HepG2 (cell line): ENCODE measurements at regions of chr10 and their contacts with region 1.

Region 1: DNA sequence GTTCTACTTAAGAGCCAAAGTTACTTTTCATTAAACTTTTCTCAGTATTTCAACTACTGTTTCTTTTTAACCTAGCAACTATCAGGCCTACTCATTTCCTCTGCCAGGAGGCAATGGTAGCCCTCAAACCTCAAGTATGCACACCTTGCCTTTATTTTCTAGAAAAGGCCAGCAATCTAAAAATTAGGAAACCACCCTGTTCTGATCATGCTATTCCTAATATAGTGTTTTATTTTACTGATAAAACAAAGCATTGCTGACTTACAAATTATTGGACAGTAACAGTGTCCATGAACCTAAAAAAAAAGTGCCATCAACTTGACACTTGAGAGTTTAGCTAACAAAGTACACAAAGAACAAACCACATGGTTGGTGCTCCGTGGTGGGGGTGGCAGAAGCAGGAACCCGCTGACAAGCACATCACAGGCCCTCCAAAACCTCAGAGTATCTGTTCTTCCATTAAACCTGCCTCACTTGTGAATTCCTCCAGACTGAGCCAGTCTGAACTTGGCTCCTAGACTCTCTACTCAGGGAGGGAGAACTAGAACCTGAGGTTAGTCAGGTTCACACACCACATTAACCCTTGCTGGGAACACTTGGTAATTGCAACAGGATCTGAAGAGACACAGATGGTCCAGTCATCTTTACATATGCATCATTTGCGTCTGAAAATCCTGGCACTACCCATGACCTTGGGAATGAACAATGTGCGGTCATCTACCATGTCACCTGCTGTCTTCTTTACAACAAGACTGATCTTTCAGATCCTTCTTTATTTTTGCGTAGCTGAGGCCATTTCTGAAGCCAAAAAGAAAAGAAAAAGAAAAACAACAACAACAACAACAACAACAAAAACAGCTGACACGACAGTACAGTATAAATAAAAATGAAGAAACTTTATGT is 31.9 kb downstream of the PIP4K2A start:
- DNase-seq: peak; percentile 69
- ATAC-seq: peak; percentile 61
- H3K4me3 ChIP-seq: peak overlapping the region; percentile 31 to 58 (median 43); a peak in 5 of 6 replicates
- H3K27ac ChIP-seq: peak overlapping the region; percentile 76
- H3K4me1 ChIP-seq: peaks cover 75% of the 10 kb centered on the region
- H3K27me3 ChIP-seq: no peaks in the 10 kb centered on the region
- CTCF ChIP-seq: no peak
- EP300 ChIP-seq: 0 out of 4 replicates have a peak, but pooled peaks of 1 of the 2 experiments have one; percentile 30
- POLR2A ChIP-seq: no peak
- RAD21 ChIP-seq: no peak

Region 2: GRCh38 chr10:22003079-22003913 is 679.2 kb before region 1 on chr10 and contains the start of gene DNAJC1:
- CTCF ChIA-PET with region 1: no interaction called
- POLR2A ChIA-PET with region 1: no interaction called
- in situ Hi-C with region 1: no loop called
- intact Hi-C with region 1: no loop called
- DNase-seq: peak; percentile 92
- ATAC-seq: peak; percentile 98
- H3K4me3 ChIP-seq: peak within 1 kb of the TSS; percentile 72 to 93 (median 83)
- H3K27ac ChIP-seq: peak within 1 kb of the TSS; percentile 84
- H3K4me1 ChIP-seq: peaks cover 20% of the 10 kb centered on the region
- H3K27me3 ChIP-seq: peaks cover 0 to 6% of the 10 kb centered on the region in 2 experiments; a peak in 1 of 5 replicates
- CTCF ChIP-seq: peak; percentile 8; the same call in 1 of the 2 replicates
- EP300 ChIP-seq: no peak
- POLR2A ChIP-seq: peak; percentile 66 to 77
- RAD21 ChIP-seq: peak; percentile 46; the same call in 1 of the 2 replicates
- total RNA-seq, gene DNAJC1: 8.8 and 16.6 TPM in 2 replicates

Region 3: GRCh38 chr10:22573820-22574569 is 108.5 kb before region 1 on chr10:
- CTCF ChIA-PET with region 1: no interaction called
- POLR2A ChIA-PET with region 1: no interaction called
- in situ Hi-C with region 1: no loop called
- intact Hi-C with region 1: no loop called
- DNase-seq: peak; percentile 28
- ATAC-seq: peak; percentile 47; the same call in 1 of the 3 replicates
- H3K4me3 ChIP-seq: no peak overlapping the region
- H3K27ac ChIP-seq: no peak overlapping the region
- H3K4me1 ChIP-seq: no peaks in the 10 kb centered on the region
- H3K27me3 ChIP-seq: no peaks in the 10 kb centered on the region
- CTCF ChIP-seq: peak; percentile 72
- EP300 ChIP-seq: no peak
- POLR2A ChIP-seq: no peak
- RAD21 ChIP-seq: peak; percentile 54

Region 4: GRCh38 chr10:22609728-22610465 is 72.6 kb before region 1 on chr10:
- CTCF ChIA-PET with region 1: no interaction called
- POLR2A ChIA-PET with region 1: no interaction called
- in situ Hi-C with region 1: no loop called
- intact Hi-C with region 1: no loop called
- DNase-seq: no peak
- ATAC-seq: no peak
- H3K4me3 ChIP-seq: no peak overlapping the region
- H3K27ac ChIP-seq: no peak overlapping the region
- H3K4me1 ChIP-seq: peaks cover 10% of the 10 kb centered on the region; the same call in 1 of the 2 replicates
- H3K27me3 ChIP-seq: no peaks in the 10 kb centered on the region
- CTCF ChIP-seq: 0 out of 2 replicates have a peak, but pooled peaks have one; percentile 8
- EP300 ChIP-seq: no peak
- POLR2A ChIP-seq: no peak
- RAD21 ChIP-seq: no peak

Region 5: DNA sequence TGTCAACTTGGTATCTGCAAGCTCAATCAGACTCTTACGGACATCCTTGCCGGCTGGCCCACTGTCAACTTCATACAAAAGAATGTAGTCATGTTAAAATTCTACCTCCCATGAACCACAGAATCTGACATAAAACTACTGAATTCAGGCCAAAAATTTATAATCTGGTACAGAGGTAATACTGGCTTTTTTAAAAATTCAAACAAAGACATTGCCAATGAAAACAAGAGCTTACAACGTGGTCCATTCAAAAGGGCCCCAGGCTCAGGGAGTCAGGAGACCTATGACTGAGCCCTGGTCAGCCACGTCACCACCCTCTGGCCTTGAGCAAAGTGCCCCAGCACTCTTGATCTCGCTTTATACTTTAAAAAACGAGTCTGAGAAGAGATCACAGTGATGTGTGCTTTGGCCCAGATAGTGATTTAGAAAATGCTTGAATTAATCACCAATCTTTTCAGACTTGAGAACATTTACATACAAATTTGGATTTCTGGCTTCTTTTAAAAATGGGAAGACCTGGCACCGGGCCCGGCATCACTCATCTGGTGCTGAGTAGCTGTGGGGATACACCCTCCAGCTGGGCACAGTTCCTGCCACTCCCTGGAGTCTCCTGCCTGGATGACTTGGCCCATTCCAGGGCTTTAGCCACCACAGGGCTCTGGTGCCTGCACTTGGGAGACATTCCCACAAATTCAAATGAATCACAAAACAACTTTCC is 62.2 kb before region 1 on chr10:
- CTCF ChIA-PET with region 1: no interaction called
- POLR2A ChIA-PET with region 1: interaction called, 5 read pairs
- in situ Hi-C with region 1: no loop called
- intact Hi-C with region 1: loop called (anchors 1 kb)
- DNase-seq: no peak
- ATAC-seq: no peak
- H3K4me3 ChIP-seq: no peak overlapping the region
- H3K27ac ChIP-seq: no peak overlapping the region
- H3K4me1 ChIP-seq: peaks cover 90% of the 10 kb centered on the region
- H3K27me3 ChIP-seq: no peaks in the 10 kb centered on the region
- CTCF ChIP-seq: no peak
- EP300 ChIP-seq: no peak
- POLR2A ChIP-seq: no peak
- RAD21 ChIP-seq: no peak

Region 6: DNA sequence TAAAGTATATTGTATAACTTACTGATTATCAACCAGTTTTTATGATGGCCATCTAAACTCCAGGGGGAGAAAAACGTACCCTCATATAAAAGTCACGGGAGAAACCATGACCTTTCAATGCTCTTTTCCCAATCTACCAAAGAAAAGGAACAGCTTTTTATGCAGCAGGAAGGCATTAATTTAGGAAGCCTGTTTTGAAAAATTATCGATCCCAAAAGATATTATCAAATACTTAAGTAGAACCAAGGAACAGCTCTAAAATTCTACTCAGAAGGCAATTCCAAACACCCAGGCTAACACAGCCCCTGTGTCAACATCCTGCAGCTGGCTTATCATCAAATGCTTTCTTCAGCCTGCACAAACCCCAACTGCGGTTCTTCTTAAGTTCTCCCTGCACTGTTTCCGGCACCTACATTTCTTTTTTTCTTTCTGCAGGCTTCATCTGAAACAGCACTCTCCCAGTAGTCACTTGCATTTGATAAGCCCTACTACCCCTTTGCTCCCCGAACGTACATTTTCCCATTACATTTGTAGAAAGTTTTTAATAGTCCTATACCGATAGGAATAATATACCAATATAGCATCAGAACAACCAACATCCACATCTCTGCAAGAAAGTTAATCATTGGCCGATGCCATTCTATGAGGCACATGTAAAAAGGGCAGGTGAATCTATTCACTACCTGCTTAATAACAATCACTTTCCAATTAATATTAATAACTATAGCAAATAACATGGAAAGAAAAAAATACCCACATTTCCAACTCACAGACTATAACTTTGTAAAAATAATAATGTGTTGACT is 16.0 kb before region 1 on chr10:
- CTCF ChIA-PET with region 1: no interaction called
- POLR2A ChIA-PET with region 1: no interaction called
- in situ Hi-C with region 1: no loop called
- intact Hi-C with region 1: loop called (anchors 2 kb)
- DNase-seq: peak; percentile 18
- ATAC-seq: peak; percentile 56
- H3K4me3 ChIP-seq: peak overlapping the region in 2 of 3 experiments; percentile 16 to 20; a peak in 2 of 6 replicates
- H3K27ac ChIP-seq: no peak overlapping the region
- H3K4me1 ChIP-seq: peaks cover 58% of the 10 kb centered on the region
- H3K27me3 ChIP-seq: no peaks in the 10 kb centered on the region
- CTCF ChIP-seq: no peak
- EP300 ChIP-seq: no peak; a peak in 1 of 4 replicates
- POLR2A ChIP-seq: no peak
- RAD21 ChIP-seq: no peak